KBM-7 (cell line): ENCODE measurements at regions of chr22 and their contacts with region 1.

Region 1: GRCh38 chr22:39859903-39860588 is 33.5 kb downstream of the ENTHD1 start:
- DNase-seq: no peak

Region 2: GRCh38 chr22:39773976-39774539 is 86.0 kb before region 1 on chr22:
- in situ Hi-C with region 1: loop called (anchors 25 kb)
- DNase-seq: no peak